PC-9 (cell line): ENCODE measurements at regions of chr3 and their contacts with region 1.

Region 1: DNA sequence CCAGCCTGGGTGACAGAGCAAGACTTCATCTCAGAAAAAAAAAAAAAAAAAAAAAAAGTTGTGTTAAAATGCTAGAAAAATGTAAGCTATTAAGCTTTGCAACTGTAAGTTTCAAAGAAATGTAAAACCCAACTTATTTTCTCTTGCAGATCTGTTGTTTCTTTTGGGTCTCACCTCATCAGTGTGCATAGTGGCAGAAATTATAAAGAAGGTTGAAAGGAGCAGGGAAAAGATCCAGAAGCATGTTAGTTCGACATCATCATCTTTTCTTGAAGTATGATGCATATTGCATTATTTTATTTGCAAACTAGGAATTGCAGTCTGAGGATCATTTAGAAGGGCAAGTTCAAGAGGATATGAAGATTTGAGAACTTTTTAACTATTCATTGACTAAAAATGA is 25.6 kb downstream of the ASTE1 start:
- DNase-seq: no peak
- H3K4me3 ChIP-seq: no peak overlapping the region
- H3K27ac ChIP-seq: no peak overlapping the region
- H3K4me1 ChIP-seq: no peaks in the 10 kb centered on the region
- H3K27me3 ChIP-seq: no peaks in the 10 kb centered on the region
- CTCF ChIP-seq: no peak

Region 2: GRCh38 chr3:131110087-131110486 is 109.0 kb after region 1 on chr3:
- CTCF ChIA-PET with region 1: no interaction called
- POLR2A ChIA-PET with region 1: interaction called, 10 read pairs
- intact Hi-C with region 1: no loop called
- DNase-seq: peak; percentile 7 to 39
- H3K4me3 ChIP-seq: no peak overlapping the region
- H3K27ac ChIP-seq: no peak overlapping the region
- H3K4me1 ChIP-seq: 0 out of 2 replicates have a peak, but pooled peaks cover 4% of the 10 kb centered on the region
- H3K27me3 ChIP-seq: no peaks in the 10 kb centered on the region
- CTCF ChIP-seq: no peak